ENCODE measurements at regions of chr2 and their contacts with region 1.

Region 1: DNA sequence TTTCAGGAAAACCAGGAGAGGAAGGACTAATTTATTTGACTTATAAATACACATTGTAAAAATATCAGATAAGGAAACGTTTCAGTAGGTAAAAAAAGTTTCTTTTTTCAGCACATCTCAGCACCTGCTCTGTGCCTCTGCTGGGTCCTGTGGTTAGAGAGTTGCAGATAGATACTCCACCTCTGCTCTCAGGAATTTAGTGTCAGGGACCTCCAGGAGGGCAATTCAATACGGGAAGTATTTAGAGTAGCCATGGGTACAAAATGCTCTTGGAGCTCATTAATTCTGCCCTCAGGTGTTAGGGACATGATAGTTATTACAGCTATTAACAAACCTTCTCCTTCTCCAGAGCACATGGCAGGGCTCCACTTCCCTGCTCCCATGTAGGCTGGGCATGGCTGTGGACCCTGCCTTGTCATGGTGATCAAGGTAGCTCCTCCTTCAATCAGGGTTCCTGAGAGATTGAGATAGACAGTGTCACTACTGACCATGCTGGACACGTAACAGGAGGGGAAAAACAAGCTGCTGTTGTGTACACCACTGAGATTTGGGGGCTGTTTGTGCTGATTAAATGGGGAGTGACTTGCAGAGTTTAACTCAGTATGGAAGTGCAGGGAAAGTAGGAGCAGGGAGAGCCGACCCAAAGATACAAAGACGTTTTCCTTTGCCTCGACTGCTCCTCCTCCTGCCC is 185.6 kb upstream of the COPS8 start:
- DNase-seq: no peak
- H3K4me3 ChIP-seq: no peak overlapping the region
- H3K4me3 Mint-ChIP-seq: no peak overlapping the region
- H3K27ac Mint-ChIP-seq: no peak overlapping the region
- H3K4me1 ChIP-seq: no peaks in the 10 kb centered on the region
- H3K4me1 Mint-ChIP-seq: peaks cover 5% of the 10 kb centered on the region
- H3K27me3 ChIP-seq: no peaks in the 10 kb centered on the region
- H3K27me3 Mint-ChIP-seq: no peaks in the 10 kb centered on the region
- CTCF ChIP-seq: no peak

Region 2: DNA sequence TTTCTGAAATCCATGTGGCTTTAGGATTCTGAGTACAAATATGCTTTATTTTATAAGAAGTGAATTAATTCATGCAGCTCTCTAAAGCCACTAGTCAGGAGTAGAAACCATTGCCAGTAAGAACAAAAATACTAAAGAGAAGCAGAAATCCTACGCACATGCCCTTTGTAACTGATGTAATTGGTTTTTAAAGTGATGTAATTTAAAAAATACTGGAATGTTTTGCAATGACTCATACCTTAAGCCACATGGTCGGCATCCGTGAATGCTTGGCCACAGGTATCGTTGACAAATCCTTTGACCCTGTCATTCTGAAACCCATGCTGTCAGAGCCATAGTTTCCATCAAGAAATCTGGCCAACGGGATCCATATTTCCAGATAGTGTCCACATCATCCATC is 117.2 kb before region 1 on chr2:
- CTCF ChIA-PET with region 1: no interaction called
- POLR2A ChIA-PET with region 1: no interaction called
- intact Hi-C with region 1: no loop called
- DNase-seq: peak in 1 of 2 experiments; percentile 21
- H3K4me3 ChIP-seq: no peak overlapping the region
- H3K4me3 Mint-ChIP-seq: no peak overlapping the region
- H3K27ac Mint-ChIP-seq: no peak overlapping the region
- H3K4me1 ChIP-seq: peaks cover 5% of the 10 kb centered on the region; the same call in 1 of the 2 replicates
- H3K4me1 Mint-ChIP-seq: no peaks in the 10 kb centered on the region
- H3K27me3 ChIP-seq: no peaks in the 10 kb centered on the region
- H3K27me3 Mint-ChIP-seq: no peaks in the 10 kb centered on the region
- CTCF ChIP-seq: no peak

Region 3: DNA sequence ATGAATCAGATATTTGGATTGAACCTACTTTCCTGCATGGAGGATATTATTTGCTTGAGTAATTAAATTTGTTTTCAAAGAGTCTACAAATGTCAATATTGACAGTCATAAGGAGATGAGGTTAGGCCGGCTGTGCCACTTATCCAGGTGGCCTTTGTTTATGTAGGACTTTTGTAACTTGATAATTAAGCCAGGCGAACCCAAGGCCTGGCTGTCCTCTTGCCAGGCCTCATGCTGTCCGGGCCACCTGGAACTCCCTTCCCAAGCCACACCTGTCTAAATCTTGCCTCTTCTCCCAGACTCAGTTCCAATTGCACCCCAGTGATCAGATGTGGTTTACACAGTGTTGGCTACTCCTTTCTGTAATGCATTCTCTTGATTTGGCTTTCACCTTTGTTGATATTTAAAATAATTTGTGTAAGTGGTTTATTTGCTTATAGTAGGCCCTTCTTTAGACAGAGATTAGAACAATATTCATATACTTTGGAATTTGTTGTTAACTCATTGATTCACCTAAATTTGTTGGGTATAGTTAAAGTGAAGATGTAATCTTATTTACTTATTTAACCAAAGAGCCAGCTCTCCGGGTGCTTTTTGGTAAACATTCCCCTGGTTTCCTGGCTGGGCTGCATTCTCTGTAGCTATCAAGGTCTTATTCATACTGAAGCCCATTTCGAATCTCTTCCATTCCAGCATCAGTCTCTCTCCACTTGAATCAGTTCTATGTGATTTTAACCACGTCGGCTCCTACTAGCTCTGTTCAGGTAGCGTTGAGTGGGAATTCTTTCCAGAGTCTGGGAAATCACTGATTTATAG is 75.0 kb before region 1 on chr2:
- CTCF ChIA-PET with region 1: no interaction called
- POLR2A ChIA-PET with region 1: no interaction called
- intact Hi-C with region 1: loop called (anchors 10 kb)
- DNase-seq: peak; percentile 32 to 49
- H3K4me3 ChIP-seq: no peak overlapping the region
- H3K4me3 Mint-ChIP-seq: no peak overlapping the region
- H3K27ac Mint-ChIP-seq: no peak overlapping the region
- H3K4me1 ChIP-seq: peaks cover 23% of the 10 kb centered on the region
- H3K4me1 Mint-ChIP-seq: peaks cover 9% of the 10 kb centered on the region
- H3K27me3 ChIP-seq: no peaks in the 10 kb centered on the region
- H3K27me3 Mint-ChIP-seq: no peaks in the 10 kb centered on the region
- CTCF ChIP-seq: no peak

Measured in Caco-2 (cell line).